ENCODE measurements at regions of chr20 and their contacts with region 1.

Region 1: GRCh38 chr20:38418509-38419204 is 16.5 kb downstream of the SNHG17 start:
- DNase-seq: peak in 4 of 5 donors; percentile 47 to 76 (median 56)
- ATAC-seq: peak; percentile 72 to 93 (median 88)
- H3K4me3 ChIP-seq: no peak overlapping the region
- H3K27ac ChIP-seq: no peak overlapping the region
- H3K4me1 ChIP-seq: peaks cover 0 to 21% (median 7%) of the 10 kb centered on the region in 12 donors
- H3K27me3 ChIP-seq: no peaks in the 10 kb centered on the region
- CTCF ChIP-seq: no peak
- POLR2A ChIP-seq: no peak

Region 2: GRCh38 chr20:38043512-38044300 is 375.0 kb before region 1 on chr20:
- intact Hi-C with region 1: loop called in 1 of 10 experiments (anchors 10 kb)
- DNase-seq: no peak
- ATAC-seq: peak in 1 of 4 donors; percentile 44
- H3K4me3 ChIP-seq: no peak overlapping the region
- H3K27ac ChIP-seq: no peak overlapping the region
- H3K4me1 ChIP-seq: peaks cover 0 to 28% (median 14%) of the 10 kb centered on the region in 12 donors
- H3K27me3 ChIP-seq: no peaks in the 10 kb centered on the region
- CTCF ChIP-seq: no peak
- POLR2A ChIP-seq: no peak

Region 3: DNA sequence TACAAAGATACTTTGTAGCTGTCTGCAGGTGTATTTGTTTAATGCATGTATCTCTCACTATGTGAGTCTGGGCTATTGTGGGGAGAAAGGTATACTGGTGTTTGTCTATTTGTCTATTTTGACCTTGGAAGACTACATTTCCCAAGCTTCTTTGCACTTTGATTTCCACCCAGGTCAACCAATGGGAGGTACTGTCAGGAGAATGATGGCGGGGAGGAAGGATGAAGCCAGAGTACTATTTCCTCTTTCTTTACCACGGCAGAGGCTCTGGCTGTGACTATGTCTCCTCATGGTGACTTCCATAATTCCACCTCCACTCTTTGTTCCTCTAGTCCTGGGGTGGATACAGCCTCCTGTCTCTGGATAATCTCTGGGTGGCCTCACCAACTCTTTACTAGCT is 49.3 kb before region 1 on chr20:
- intact Hi-C with region 1: no loop called
- DNase-seq: no peak
- ATAC-seq: no peak
- H3K4me3 ChIP-seq: no peak overlapping the region
- H3K27ac ChIP-seq: no peak overlapping the region
- H3K4me1 ChIP-seq: peaks cover 0 to 13% (median 0%) of the 10 kb centered on the region in 12 donors
- H3K27me3 ChIP-seq: no peaks in the 10 kb centered on the region
- CTCF ChIP-seq: no peak
- POLR2A ChIP-seq: no peak

Region 4: DNA sequence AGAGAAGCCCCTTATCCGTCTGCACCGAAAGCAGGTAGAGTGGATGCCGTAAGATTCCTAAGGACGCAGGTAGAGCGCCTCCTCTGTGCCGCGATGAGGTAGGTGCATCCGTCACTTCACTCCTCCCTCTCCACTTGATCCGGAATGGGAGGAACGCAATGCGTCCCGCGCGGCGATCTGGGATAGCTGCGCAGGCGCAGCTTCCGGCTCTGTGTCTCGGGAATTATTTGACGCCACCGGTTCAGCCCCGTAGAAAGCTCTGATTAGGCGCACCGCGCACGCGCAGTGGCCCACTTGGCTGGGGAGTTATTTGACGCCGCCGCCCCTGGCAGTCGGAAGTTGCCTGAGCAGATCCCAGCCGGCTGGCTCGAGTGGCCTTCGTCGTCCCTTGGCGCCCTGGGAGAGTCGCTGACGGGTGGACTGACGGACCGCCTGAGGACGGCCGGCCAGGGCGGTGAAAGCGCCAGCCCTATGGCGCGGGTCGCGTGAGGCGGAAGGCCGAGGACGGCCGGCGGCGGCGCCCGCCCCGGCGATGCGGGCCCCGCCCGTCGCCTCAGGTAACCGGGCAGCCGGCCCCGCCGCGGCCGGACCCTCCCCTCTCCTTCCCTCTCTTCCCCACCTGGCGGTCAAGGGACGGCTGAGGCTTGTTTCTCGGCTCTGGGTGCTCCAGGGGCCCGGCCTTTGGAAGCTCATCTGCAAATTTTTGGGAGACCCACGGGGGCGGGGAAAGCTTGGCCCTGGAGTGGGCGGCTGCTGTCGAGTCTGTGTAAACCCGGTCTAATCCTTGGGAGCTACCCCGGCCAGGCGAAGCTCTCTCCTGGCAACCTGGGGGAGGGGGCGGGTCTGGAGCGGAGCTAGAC is 54.1 kb after region 1 on chr20 and contains the start of gene RALGAPB:
- intact Hi-C with region 1: no loop called
- DNase-seq: peak; percentile 99 to 100 (median 99)
- ATAC-seq: peak; percentile 93 to 99 (median 96)
- H3K4me3 ChIP-seq: peak within 1 kb of the TSS; percentile 64 to 95 (median 84)
- H3K27ac ChIP-seq: peak within 1 kb of the TSS; percentile 70 to 94 (median 88)
- H3K4me1 ChIP-seq: peaks cover 0 to 42% (median 22%) of the 10 kb centered on the region in 12 donors
- H3K27me3 ChIP-seq: no peaks in the 10 kb centered on the region
- CTCF ChIP-seq: peak in 9 of 12 donors; percentile 29 to 62 (median 45)
- POLR2A ChIP-seq: peak in 1 of 2 donors; percentile 66
- total RNA-seq, gene RALGAPB: 19.7 to 31.4 (median 26.2) TPM

Region 5: GRCh38 chr20:38498909-38499308 is 80.3 kb after region 1 on chr20:
- intact Hi-C with region 1: no loop called
- DNase-seq: no peak
- ATAC-seq: no peak
- H3K4me3 ChIP-seq: no peak overlapping the region
- H3K27ac ChIP-seq: no peak overlapping the region
- H3K4me1 ChIP-seq: peaks cover 0 to 5% (median 0%) of the 10 kb centered on the region in 12 donors
- H3K27me3 ChIP-seq: no peaks in the 10 kb centered on the region
- CTCF ChIP-seq: no peak
- POLR2A ChIP-seq: no peak

Region 6: DNA sequence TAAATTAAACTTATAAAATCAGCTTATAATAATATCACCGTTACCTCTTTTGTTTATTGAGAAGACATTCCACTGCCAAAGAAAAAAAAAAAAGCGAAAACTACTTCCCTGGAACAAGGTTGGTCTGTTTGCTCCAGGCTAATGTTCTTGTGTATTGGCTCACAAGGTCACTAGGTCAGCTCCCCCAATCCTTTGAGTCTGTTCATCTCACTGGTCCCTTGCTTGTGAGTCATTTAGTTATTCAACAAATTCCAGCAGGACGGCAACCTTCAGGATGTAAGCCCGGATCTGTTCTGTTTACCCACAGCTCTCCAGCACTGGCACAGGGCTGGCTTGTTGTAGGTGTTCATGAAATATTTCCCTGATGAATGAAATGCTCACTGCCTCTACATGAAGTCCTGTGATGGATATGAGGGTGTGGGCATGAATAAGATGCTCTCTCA is 186.2 kb after region 1 on chr20:
- intact Hi-C with region 1: no loop called
- DNase-seq: no peak
- ATAC-seq: no peak
- H3K4me3 ChIP-seq: no peak overlapping the region
- H3K27ac ChIP-seq: no peak overlapping the region
- H3K4me1 ChIP-seq: peaks cover 0 to 11% (median 0%) of the 10 kb centered on the region in 12 donors
- H3K27me3 ChIP-seq: peaks cover 6 to 61% (median 17%) of the 10 kb centered on the region in 9 donors
- CTCF ChIP-seq: no peak
- POLR2A ChIP-seq: no peak